ENCODE measurements at regions of chr10 and their contacts with region 1.

Region 1: GRCh38 chr10:84139126-84140035 is at the start of gene GHITM:
- DNase-seq: peak; percentile 100
- ATAC-seq: peak; percentile 95
- H3K4me3 Mint-ChIP-seq: peak within 1 kb of the TSS; percentile 93
- H3K27ac Mint-ChIP-seq: peak within 1 kb of the TSS; percentile 97
- H3K4me1 Mint-ChIP-seq: peaks cover 28% of the 10 kb centered on the region
- H3K27me3 Mint-ChIP-seq: peaks cover under 1% of the 10 kb centered on the region
- total RNA-seq, gene GHITM: 123 to 133 TPM

Region 2: DNA sequence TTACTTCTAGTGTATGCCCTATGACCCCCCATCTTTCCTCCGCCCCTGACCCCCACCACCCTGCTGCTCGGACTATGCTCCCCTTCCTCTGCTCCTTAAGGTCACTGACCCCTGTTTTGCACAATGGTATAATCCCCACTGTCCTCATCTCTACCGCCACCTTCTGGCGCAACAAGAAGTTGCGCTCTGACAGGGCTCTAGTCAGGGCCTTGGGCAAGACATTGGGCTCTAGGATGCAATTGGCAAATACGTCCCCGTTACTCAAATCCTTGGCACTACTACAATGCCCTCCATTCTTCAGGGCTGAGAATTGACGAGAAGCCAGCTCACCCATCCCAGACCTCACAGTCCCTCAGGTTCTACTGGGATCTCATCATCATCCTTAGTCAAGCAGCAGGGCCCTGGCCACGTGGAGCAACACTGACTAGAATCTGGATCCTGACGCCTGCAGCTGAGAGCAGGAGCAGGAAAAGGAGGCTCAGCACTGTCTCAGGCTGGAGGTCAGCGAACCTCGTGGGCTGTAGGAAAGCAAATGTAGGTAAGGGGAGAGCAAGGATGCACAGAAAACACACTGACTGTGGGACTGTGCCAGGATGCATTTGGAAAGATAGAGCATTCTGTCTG is 75.3 kb after region 1 on chr10:
- CTCF ChIA-PET with region 1: interaction called, 12 read pairs
- POLR2A ChIA-PET with region 1: no interaction called
- DNase-seq: peak; percentile 54
- ATAC-seq: peak; percentile 73
- H3K4me3 Mint-ChIP-seq: no peak overlapping the region
- H3K27ac Mint-ChIP-seq: no peak overlapping the region
- H3K4me1 Mint-ChIP-seq: no peaks in the 10 kb centered on the region
- H3K27me3 Mint-ChIP-seq: no peaks in the 10 kb centered on the region

Region 3: DNA sequence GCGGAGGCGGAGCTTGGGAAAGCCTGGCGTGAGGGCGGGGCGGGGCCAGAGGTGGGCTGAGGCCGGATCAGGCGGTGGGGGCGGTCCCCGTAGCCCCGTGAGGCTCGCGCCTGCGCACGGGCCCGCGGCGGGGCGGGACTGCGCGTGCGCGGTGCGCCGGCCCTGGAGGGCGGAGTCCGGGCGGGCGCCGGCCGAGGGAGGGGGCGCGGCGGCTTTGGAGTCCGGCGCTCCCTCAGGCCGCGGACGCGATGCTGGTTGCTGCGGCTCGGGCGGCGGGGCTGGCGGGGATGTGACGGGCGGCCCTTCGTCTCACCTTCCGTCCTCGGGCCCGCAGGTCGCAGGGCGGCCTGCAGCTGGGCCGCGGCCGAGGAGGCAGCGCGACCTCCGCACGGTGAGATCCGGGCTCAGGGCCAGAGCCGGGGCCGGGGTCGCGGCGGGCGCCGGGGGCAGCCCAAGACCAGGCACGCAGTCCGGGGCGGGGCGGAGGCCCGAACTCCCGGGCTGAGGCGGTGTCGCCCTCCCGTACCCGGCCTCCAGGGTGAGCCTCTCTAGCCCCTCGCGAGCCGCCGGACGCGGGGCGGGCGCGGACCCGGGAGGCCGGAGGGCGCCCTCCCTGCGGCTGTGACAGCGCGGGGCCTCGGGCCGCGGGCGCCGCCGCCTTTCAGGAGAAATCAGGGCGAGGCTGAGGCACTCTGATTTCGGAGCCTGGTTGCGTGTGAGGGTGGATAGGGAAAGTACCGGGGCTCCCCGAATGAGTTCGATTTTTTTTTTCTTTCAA is 189.2 kb after region 1 on chr10 and contains the start of gene CCSER2:
- CTCF ChIA-PET with region 1: no interaction called
- POLR2A ChIA-PET with region 1: interaction called, 11 read pairs
- DNase-seq: peak; percentile 94
- ATAC-seq: peak; percentile 80
- H3K4me3 Mint-ChIP-seq: peak within 1 kb of the TSS; percentile 82
- H3K27ac Mint-ChIP-seq: peak within 1 kb of the TSS; percentile 92
- H3K4me1 Mint-ChIP-seq: peaks cover 34% of the 10 kb centered on the region
- H3K27me3 Mint-ChIP-seq: peaks cover 3% of the 10 kb centered on the region
- total RNA-seq, gene CCSER2: 77.8 to 78.8 TPM